MCF 10A (cell line): ENCODE measurements at regions of chr2 and their contacts with region 1.

Region 1: DNA sequence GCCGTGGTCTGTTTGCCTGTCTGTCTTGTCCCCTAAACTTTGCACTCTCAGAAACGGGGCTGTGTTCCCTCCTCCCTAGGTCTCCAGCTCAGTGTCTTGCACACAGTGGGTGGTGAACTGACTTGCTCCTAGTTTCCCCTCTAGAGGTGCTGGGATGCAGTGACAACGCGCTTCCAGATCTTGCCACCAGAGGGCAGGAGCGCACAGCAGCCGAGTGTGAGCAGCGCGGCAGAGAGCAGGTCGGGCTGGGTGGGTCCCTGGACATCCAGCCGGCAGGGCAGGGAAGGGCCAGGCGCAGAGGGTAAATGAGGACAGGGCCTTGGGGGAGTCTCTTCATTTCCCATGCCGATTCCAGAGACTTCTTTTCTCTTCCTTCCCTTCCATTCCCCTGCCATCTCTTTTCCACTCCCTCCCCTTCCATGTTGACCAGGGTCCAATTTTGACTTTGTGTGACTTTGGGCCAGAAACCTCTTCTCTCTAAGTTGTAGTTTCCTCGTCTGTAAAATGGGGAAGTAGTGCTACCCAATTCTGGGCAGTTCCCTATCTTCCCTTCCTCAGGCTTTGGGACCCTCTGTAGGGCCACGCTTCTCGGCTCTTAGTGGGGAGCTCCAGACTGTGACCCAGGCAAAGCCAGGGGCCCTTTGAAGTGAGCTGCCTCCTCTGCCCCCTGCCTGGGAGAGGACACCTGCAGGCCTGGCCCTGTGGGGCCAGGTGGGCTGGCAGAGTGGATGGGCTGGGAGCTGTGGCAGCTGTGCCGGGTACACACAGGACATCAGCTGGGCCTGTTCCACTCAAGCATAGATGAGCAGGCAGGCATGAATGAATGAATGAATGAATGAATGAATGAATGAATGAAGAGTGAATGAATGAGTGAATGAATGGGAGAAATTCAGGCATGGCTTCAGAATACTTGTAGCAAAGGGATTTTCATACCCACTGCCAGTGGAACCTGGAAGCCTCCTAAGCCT is 43.3 kb upstream of the TAF1B start:
- DNase-seq: peak; percentile 87
- H3K4me3 Mint-ChIP-seq: peak overlapping the region; percentile 35
- H3K27ac Mint-ChIP-seq: peak overlapping the region; percentile 46
- H3K4me1 Mint-ChIP-seq: peaks cover 41% of the 10 kb centered on the region
- H3K27me3 Mint-ChIP-seq: no peaks in the 10 kb centered on the region
- CTCF ChIP-seq: peak; percentile 95

Region 2: GRCh38 chr2:9675415-9676351 is 124.3 kb before region 1 on chr2:
- CTCF ChIA-PET with region 1: no interaction called
- POLR2A ChIA-PET with region 1: no interaction called
- intact Hi-C with region 1: no loop called
- DNase-seq: peak; percentile 68
- H3K4me3 Mint-ChIP-seq: peak overlapping the region; percentile 28
- H3K27ac Mint-ChIP-seq: peak overlapping the region; percentile 75
- H3K4me1 Mint-ChIP-seq: peaks cover 17% of the 10 kb centered on the region
- H3K27me3 Mint-ChIP-seq: no peaks in the 10 kb centered on the region
- CTCF ChIP-seq: no peak

Region 3: GRCh38 chr2:9782197-9782719 is 17.7 kb before region 1 on chr2:
- CTCF ChIA-PET with region 1: interaction called, 25 read pairs
- POLR2A ChIA-PET with region 1: interaction called, 12 read pairs
- intact Hi-C with region 1: no loop called
- DNase-seq: peak; percentile 75
- H3K4me3 Mint-ChIP-seq: no peak overlapping the region
- H3K27ac Mint-ChIP-seq: peak overlapping the region; percentile 85
- H3K4me1 Mint-ChIP-seq: peaks cover 17% of the 10 kb centered on the region
- H3K27me3 Mint-ChIP-seq: no peaks in the 10 kb centered on the region
- CTCF ChIP-seq: no peak

Region 4: GRCh38 chr2:9820020-9820419 is 20.1 kb after region 1 on chr2:
- CTCF ChIA-PET with region 1: interaction called, 95 read pairs
- POLR2A ChIA-PET with region 1: interaction called, 29 read pairs
- intact Hi-C with region 1: no loop called
- DNase-seq: peak; percentile 90
- H3K4me3 Mint-ChIP-seq: peak overlapping the region; percentile 22
- H3K27ac Mint-ChIP-seq: peak overlapping the region; percentile 90
- H3K4me1 Mint-ChIP-seq: peaks cover 17% of the 10 kb centered on the region
- H3K27me3 Mint-ChIP-seq: no peaks in the 10 kb centered on the region
- CTCF ChIP-seq: no peak

Region 5: DNA sequence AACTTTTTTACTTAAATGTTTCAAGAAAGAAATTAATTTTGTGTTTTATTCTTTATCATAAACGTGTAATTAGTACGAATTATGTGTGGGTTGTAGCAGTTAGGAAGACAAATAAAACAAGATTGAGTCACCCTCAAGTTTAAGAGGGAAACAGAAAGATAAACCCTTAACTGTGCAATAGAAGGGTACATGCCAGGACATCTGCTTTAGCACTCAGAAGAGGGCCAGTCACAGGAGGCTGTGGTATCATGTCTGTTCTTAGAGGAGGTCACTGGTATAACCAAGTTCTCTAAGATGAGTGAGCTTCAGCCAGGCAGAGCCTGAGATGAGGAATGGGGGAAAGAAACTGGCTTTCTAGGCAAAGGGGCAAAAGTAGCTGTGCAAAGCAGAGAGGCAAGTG is 109.2 kb after region 1 on chr2:
- CTCF ChIA-PET with region 1: interaction called, 54 read pairs
- POLR2A ChIA-PET with region 1: interaction called, 36 read pairs
- intact Hi-C with region 1: loop called (anchors 1 kb)
- DNase-seq: no peak
- H3K4me3 Mint-ChIP-seq: no peak overlapping the region
- H3K27ac Mint-ChIP-seq: no peak overlapping the region
- H3K4me1 Mint-ChIP-seq: peaks cover 9% of the 10 kb centered on the region
- H3K27me3 Mint-ChIP-seq: no peaks in the 10 kb centered on the region
- CTCF ChIP-seq: no peak

Region 6: DNA sequence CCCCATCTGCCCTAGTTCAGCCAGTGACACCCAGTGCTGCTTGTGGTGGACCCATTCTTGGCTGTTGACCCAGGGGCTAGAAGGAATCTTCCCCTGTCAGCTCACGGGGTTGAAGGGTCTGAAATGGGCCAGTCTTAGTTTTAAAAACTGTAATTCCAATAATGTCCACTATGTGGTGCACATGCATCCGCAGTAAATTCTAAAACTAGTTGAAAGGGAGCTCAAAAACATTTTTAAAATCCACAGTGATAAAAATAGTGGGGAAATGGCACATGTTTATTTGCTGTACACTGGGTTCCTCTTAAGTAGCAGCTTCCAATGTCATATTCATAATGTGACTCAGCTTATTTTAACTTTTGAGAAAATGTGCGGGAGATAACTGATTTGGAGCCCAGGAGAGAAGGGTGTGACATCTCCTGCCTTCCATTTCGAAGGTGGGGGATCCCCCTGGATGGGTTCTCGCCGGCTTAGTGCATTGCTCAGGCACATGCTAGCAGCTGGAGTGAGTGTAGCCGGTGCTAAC is 184.3 kb after region 1 on chr2:
- CTCF ChIA-PET with region 1: interaction called, 14 read pairs
- POLR2A ChIA-PET with region 1: no interaction called
- intact Hi-C with region 1: no loop called
- DNase-seq: peak; percentile 62
- H3K4me3 Mint-ChIP-seq: no peak overlapping the region
- H3K27ac Mint-ChIP-seq: no peak overlapping the region
- H3K4me1 Mint-ChIP-seq: no peaks in the 10 kb centered on the region
- H3K27me3 Mint-ChIP-seq: no peaks in the 10 kb centered on the region
- CTCF ChIP-seq: peak; percentile 63